Sigmoid colon (tissue), 7 donors: ENCODE measurements at regions of chr15 and their contacts with region 1.

Region 1: GRCh38 chr15:82952158-82953081 is at the start of gene HOMER2:
- DNase-seq: no peak
- H3K4me3 ChIP-seq: peak within 1 kb of the TSS; percentile 40 to 79 (median 66)
- H3K27ac ChIP-seq: peak within 1 kb of the TSS; percentile 20 to 72 (median 51)
- H3K4me1 ChIP-seq: peaks cover 0 to 16% (median 10%) of the 10 kb centered on the region in 4 donors
- H3K27me3 ChIP-seq: no peaks in the 10 kb centered on the region
- CTCF ChIP-seq: no peak
- EP300 ChIP-seq: no peak
- POLR2A ChIP-seq: no peak
- total RNA-seq, gene HOMER2: 7.1 to 16.8 (median 14.0) TPM

Region 2: GRCh38 chr15:82894971-82895520 is 57.4 kb before region 1 on chr15:
- intact Hi-C with region 1: loop called (anchors 5 kb)
- DNase-seq: no peak
- H3K4me3 ChIP-seq: no peak overlapping the region
- H3K27ac ChIP-seq: peak overlapping the region in 3 of 4 donors; percentile 3 to 62 (median 44)
- H3K4me1 ChIP-seq: peaks cover 0 to 48% (median 22%) of the 10 kb centered on the region in 4 donors
- H3K27me3 ChIP-seq: no peaks in the 10 kb centered on the region
- CTCF ChIP-seq: no peak
- EP300 ChIP-seq: no peak
- POLR2A ChIP-seq: no peak